Right cardiac atrium (tissue), 5 donors: ENCODE measurements at regions of chr15 and their contacts with region 1.

Region 1: GRCh38 chr15:23648920-23649515 is 1.4 kb upstream of the MAGEL2 start:
- DNase-seq: peak in 2 of 3 donors; percentile 61 to 62
- ATAC-seq: peak in 1 of 2 donors; percentile 47
- H3K4me3 ChIP-seq: no peak overlapping the region
- H3K27ac ChIP-seq: no peak overlapping the region
- H3K4me1 ChIP-seq: no peaks in the 10 kb centered on the region
- H3K27me3 ChIP-seq: no peaks in the 10 kb centered on the region

Region 2: GRCh38 chr15:23503576-23503975 is 145.4 kb before region 1 on chr15:
- intact Hi-C with region 1: no loop called
- DNase-seq: no peak
- ATAC-seq: no peak
- H3K4me3 ChIP-seq: no peak overlapping the region
- H3K27ac ChIP-seq: no peak overlapping the region
- H3K4me1 ChIP-seq: no peaks in the 10 kb centered on the region
- H3K27me3 ChIP-seq: no peaks in the 10 kb centered on the region

Region 3: GRCh38 chr15:23595368-23595767 is 53.6 kb before region 1 on chr15:
- intact Hi-C with region 1: no loop called
- DNase-seq: no peak
- ATAC-seq: no peak
- H3K4me3 ChIP-seq: no peak overlapping the region
- H3K27ac ChIP-seq: no peak overlapping the region
- H3K4me1 ChIP-seq: no peaks in the 10 kb centered on the region
- H3K27me3 ChIP-seq: no peaks in the 10 kb centered on the region

Region 4: DNA sequence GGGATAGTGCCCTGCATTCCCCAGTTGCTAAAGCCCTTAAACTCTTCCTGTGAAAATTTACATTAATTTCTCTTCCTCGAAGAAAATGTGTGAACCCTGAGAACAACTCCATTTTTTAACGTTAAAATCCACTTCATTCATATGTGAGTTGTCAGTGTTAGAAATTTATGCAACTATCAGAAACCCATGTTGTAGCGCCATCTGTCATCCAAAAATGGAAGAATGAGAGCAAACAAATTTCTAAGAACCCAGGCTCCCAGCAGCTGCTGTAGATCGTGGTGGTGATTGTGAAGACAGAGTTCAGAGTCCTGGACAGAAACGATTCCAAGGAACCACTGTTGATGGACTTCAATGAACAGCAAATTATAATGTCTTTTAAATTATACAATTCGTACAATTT is 217.8 kb after region 1 on chr15:
- intact Hi-C with region 1: loop called (anchors 5 to 10 kb)
- DNase-seq: no peak
- ATAC-seq: no peak
- H3K4me3 ChIP-seq: no peak overlapping the region
- H3K27ac ChIP-seq: no peak overlapping the region
- H3K4me1 ChIP-seq: no peaks in the 10 kb centered on the region
- H3K27me3 ChIP-seq: no peaks in the 10 kb centered on the region